WTC11 (cell line): ENCODE measurements at regions of chr1 and their contacts with region 1.

Region 1: DNA sequence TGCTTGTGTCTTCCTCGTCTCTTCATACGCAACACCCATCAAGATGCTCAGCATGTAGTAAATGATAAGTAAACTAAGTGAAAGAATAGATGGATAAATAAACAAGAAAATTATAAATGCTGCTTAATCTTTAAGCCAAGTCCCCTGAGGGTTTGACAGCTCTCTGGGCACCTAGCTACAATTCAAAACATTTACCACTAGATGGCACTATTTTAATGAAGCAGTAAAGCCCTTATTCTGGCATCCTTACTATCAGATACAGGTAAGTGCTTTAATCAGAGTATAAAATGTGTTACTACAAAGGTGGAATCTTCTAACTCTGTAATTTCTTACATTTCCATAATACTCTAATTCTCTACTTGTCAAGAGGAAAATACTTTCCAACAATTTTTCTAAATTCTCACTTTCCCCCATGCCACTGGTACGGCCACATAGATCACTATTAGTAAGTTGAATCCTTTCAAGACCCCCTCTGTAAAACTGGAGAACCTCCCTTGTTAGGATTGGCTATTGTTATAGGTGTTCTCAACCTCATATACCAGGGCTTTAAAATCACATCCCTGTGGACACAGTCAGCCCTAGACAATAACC is 137.8 kb downstream of the BARHL2 start:
- DNase-seq: no peak
- ATAC-seq: peak; percentile 78
- H3K4me3 Mint-ChIP-seq: no peak overlapping the region
- H3K27ac Mint-ChIP-seq: no peak overlapping the region
- H3K4me1 Mint-ChIP-seq: no peaks in the 10 kb centered on the region
- H3K27me3 Mint-ChIP-seq: peaks cover 4% of the 10 kb centered on the region
- CTCF ChIP-seq: peak; percentile 38

Region 2: DNA sequence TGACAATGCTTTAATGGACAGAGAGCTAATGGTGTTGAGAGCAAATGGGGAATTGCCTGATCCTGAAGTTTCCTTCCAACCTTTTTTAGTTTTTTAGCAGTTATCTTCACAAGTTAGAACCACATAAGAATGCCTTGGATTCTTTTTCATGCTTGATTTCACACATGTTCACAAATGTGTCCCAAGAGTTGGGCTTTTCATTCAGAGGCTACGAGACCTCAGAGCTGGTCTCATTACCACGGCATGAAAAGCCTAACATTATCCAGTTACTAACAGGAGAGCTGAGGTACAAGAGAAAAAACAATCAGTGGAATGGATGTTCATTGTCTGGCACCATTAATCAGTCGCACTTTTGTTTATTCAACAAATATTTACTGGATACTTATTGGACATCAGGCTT is 243.7 kb before region 1 on chr1:
- CTCF ChIA-PET with region 1: no interaction called
- POLR2A ChIA-PET with region 1: no interaction called
- DNase-seq: no peak
- ATAC-seq: no peak
- H3K4me3 Mint-ChIP-seq: no peak overlapping the region
- H3K27ac Mint-ChIP-seq: no peak overlapping the region
- H3K4me1 Mint-ChIP-seq: peaks cover 3% of the 10 kb centered on the region; the same call in 1 of the 2 replicates
- H3K27me3 Mint-ChIP-seq: no peaks in the 10 kb centered on the region
- CTCF ChIP-seq: no peak

Region 3: DNA sequence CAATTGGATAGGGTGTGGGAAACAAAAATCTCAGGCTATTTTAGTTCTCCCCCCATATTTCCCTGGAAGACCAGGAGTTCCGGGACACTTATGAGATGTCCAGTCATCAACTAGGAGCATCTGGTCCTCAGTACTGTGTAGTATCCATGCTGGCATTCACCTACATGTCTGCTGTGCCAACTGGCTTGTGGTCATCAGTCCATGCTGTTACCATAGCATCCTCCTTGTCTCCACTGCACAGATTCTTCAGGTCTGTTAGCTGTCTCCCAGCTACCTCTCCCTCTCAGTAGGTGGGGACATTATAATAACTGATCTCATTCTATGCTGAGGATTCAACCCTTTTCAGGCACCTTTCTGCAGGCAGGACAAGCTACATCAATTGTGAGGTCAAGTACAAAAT is 165.1 kb before region 1 on chr1:
- CTCF ChIA-PET with region 1: no interaction called
- POLR2A ChIA-PET with region 1: no interaction called
- DNase-seq: no peak
- ATAC-seq: no peak
- H3K4me3 Mint-ChIP-seq: no peak overlapping the region
- H3K27ac Mint-ChIP-seq: no peak overlapping the region
- H3K4me1 Mint-ChIP-seq: no peaks in the 10 kb centered on the region
- H3K27me3 Mint-ChIP-seq: no peaks in the 10 kb centered on the region; the same call in 1 of the 2 replicates
- CTCF ChIP-seq: no peak

Region 4: GRCh38 chr1:90550626-90551406 is 28.5 kb before region 1 on chr1:
- CTCF ChIA-PET with region 1: interaction called, 15 read pairs
- POLR2A ChIA-PET with region 1: no interaction called
- DNase-seq: peak; percentile 41
- ATAC-seq: peak; percentile 100
- H3K4me3 Mint-ChIP-seq: no peak overlapping the region
- H3K27ac Mint-ChIP-seq: no peak overlapping the region
- H3K4me1 Mint-ChIP-seq: peaks cover 16% of the 10 kb centered on the region
- H3K27me3 Mint-ChIP-seq: peaks cover 20% of the 10 kb centered on the region
- CTCF ChIP-seq: no peak

Region 5: GRCh38 chr1:90561911-90562310 is 17.4 kb before region 1 on chr1:
- CTCF ChIA-PET with region 1: interaction called, 40 read pairs
- POLR2A ChIA-PET with region 1: no interaction called
- DNase-seq: peak; percentile 51
- ATAC-seq: peak; percentile 94
- H3K4me3 Mint-ChIP-seq: peak overlapping the region; percentile 10; the same call in 1 of the 2 replicates
- H3K27ac Mint-ChIP-seq: no peak overlapping the region
- H3K4me1 Mint-ChIP-seq: peaks cover 45% of the 10 kb centered on the region
- H3K27me3 Mint-ChIP-seq: peaks cover 92% of the 10 kb centered on the region
- CTCF ChIP-seq: no peak

Region 6: GRCh38 chr1:90568436-90568835 is 10.9 kb before region 1 on chr1:
- CTCF ChIA-PET with region 1: interaction called, 40 read pairs
- POLR2A ChIA-PET with region 1: no interaction called
- DNase-seq: no peak
- ATAC-seq: no peak
- H3K4me3 Mint-ChIP-seq: no peak overlapping the region
- H3K27ac Mint-ChIP-seq: no peak overlapping the region
- H3K4me1 Mint-ChIP-seq: peaks cover 5% of the 10 kb centered on the region
- H3K27me3 Mint-ChIP-seq: peaks cover 52% of the 10 kb centered on the region
- CTCF ChIP-seq: no peak

Region 7: DNA sequence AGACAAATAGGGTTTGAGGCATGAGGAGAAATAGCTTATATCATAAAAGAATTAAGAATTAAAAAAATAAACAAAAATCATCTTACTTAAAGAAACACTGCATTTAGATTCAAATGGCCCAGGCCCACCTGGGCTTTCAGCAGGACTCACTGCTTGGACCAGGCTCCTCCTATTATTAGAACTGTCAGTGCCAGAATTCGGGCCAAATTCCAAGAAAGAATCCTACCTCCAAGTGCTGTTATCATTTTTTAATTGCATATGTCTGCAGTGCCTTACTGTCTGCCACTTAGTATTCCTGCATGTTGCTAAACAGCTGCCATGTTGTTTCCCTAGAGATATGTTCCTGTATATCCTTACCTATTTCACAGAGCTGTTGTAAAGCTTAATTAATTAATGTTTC is 25.8 kb after region 1 on chr1:
- CTCF ChIA-PET with region 1: interaction called, 12 read pairs
- POLR2A ChIA-PET with region 1: no interaction called
- DNase-seq: no peak
- ATAC-seq: no peak
- H3K4me3 Mint-ChIP-seq: no peak overlapping the region
- H3K27ac Mint-ChIP-seq: no peak overlapping the region
- H3K4me1 Mint-ChIP-seq: 0 out of 2 replicates have a peak, but pooled peaks cover 4% of the 10 kb centered on the region
- H3K27me3 Mint-ChIP-seq: no peaks in the 10 kb centered on the region
- CTCF ChIP-seq: no peak